Activated T-helper 2 cell treated with anti-CD3 and anti-CD28 coated beads, Interferon-gamma antibody, Interleukin-2, Interleukin-4, amounts not matched to agents 10 μg/mL and 5 μg/mL and 100 μg/mL, durations not matched to agents 14 hours and 24 hours and 36 hours (primary cell): ENCODE measurements at regions of chr9 and their contacts with region 1.

Region 1: DNA sequence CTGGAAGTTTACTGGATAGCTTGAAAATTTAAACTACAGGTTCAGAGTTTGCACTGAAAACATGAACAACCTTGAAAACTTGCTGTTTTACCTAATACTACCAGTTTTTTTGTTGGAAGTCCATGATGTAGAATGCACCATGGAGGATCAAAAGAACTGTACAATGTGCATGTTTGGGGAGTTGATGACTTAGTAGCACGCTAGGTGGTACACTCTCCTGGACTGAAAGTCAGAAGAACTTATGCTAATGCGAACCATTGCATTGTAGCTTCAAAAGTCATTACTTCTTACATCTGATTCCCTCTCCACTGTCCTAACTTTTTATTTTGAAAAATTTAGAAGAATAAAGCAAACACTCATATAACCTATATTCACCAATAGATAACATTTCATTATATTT is 211.0 kb downstream of the OSTF1 start:
- DNase-seq: no peak
- H3K4me3 Mint-ChIP-seq: no peak overlapping the region
- H3K27ac Mint-ChIP-seq: no peak overlapping the region
- H3K4me1 Mint-ChIP-seq: no peaks in the 10 kb centered on the region
- H3K27me3 Mint-ChIP-seq: no peaks in the 10 kb centered on the region

Region 2: DNA sequence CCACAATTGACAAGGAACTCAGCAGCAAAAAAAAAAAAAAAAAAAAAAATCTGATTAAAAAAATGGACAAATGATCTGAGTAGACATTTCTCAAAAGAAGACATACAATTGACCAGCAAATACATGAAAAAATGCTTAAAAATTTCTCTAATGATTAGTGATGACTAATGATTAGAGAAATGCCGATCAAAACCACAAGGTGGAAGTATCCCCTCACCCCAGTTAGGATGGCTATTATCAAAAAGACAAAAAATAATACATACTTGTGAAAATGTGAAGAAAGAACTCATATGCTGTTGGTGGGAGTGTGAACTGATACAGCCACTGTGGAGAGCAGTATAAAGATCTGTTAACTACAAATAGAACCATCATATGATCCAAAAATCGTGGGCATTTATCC is 34.3 kb after region 1 on chr9:
- intact Hi-C with region 1: loop called (anchors 5 kb)
- DNase-seq: no peak
- H3K4me3 Mint-ChIP-seq: no peak overlapping the region
- H3K27ac Mint-ChIP-seq: no peak overlapping the region
- H3K4me1 Mint-ChIP-seq: no peaks in the 10 kb centered on the region
- H3K27me3 Mint-ChIP-seq: no peaks in the 10 kb centered on the region